Dendritic cell treated with granulocyte-macrophage colony-stimulating factor and Interleukin-4, amounts not matched to agents 40 ng/mL and 50 ng/mL, for 4 days (primary cell): ENCODE measurements at regions of chr21 and their contacts with region 1.

Region 1: GRCh38 chr21:35840197-35840799 is 220.0 kb downstream of the SETD4 start:
- H3K4me3 Mint-ChIP-seq: no peak overlapping the region
- H3K27ac Mint-ChIP-seq: no peak overlapping the region
- H3K4me1 Mint-ChIP-seq: no peaks in the 10 kb centered on the region
- H3K27me3 Mint-ChIP-seq: peaks cover 9% of the 10 kb centered on the region

Region 2: DNA sequence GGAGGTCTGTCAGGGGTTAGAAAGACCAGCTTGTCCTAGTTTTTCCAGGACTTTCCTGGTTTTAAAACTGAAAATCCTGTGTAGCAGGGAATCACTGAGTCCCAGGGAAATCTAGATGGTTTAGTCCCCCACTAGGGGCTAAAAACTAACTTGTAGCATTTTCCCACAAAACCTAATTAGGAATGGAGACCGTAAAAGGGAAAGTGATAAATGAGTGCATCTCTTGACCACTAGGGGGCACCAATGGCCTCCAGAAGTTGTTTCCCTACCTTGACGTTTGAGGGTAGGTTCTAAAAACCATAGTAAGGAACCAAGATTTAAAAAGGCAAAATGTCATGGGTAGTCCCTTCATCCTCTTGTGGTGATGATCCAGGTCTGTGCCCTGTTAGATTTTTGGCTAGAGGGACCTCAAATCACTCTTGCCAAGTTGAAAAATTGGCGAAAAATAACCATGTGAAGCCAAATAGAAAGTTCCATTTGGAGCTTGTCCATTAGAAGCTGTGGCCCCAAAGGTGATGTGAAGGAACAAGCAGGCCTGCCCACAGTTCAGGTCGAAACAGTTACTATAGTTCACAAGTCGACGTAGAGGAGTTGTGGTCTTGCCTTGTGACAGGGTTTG is 1147.0 kb before region 1 on chr21:
- intact Hi-C with region 1: loop called (anchors 5 kb)
- H3K4me3 Mint-ChIP-seq: no peak overlapping the region
- H3K27ac Mint-ChIP-seq: no peak overlapping the region
- H3K4me1 Mint-ChIP-seq: peaks cover 5% of the 10 kb centered on the region
- H3K27me3 Mint-ChIP-seq: peaks cover 16% of the 10 kb centered on the region

Region 3: GRCh38 chr21:35940074-35940927 is 100.0 kb after region 1 on chr21:
- intact Hi-C with region 1: loop called (anchors 5 kb)
- H3K4me3 Mint-ChIP-seq: no peak overlapping the region
- H3K27ac Mint-ChIP-seq: no peak overlapping the region
- H3K4me1 Mint-ChIP-seq: no peaks in the 10 kb centered on the region
- H3K27me3 Mint-ChIP-seq: no peaks in the 10 kb centered on the region